ENCODE measurements at regions of chr1 and their contacts with region 1.

Region 1: GRCh38 chr1:110780600-110781484 is 92.1 kb upstream of the CD53 start:
- DNase-seq: peak; percentile 44 to 70 (median 49)
- ATAC-seq: peak; percentile 29 to 79
- H3K4me3 ChIP-seq: no peak overlapping the region
- H3K27ac ChIP-seq: no peak overlapping the region
- H3K4me1 ChIP-seq: no peaks in the 10 kb centered on the region
- H3K27me3 ChIP-seq: no peaks in the 10 kb centered on the region

Region 2: DNA sequence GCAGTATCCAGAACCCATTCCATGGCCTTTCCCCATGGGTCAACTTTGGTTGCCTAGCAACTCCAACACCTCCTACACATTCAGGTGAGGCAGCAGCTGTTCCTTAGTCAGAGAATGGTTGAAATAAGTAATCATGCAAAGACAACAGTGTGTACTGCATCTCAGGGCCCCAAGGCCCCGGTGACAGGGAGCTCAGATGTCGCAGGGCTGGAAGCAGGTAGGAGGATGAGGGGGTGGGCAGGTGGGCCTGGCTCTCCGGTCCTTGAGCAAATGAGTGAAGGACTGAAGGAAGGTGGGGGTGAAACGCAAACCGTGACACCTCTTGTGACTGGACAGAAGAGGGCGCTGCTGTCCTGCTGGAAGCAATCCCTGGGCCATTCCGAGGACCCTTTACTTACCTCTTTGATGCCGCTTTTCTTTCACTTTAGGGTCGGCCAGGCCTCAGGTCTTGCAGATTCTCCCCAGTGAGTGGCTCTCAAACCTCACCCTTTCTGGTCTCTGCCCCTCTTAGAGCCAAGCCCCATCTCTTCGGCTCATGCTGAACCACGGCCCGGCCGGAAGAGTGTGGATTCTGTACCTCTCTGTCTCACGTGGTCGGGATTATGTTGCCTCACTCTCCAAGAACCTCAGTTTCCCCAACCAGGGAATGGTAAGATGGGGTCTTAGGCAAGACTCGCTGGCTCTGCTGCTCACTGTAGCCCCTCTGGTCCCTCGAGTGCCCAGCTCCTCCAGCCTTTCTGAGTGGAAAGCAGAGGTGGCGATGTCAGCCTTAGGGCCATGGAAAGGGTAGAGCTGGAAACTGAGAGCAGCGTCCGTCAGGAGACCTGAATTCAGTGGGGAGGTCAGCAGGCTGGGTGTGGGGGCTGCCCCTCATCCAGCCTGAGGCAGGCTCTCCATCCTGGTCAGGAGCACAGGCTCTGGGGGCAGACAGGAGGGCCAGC is 256.3 kb before region 1 on chr1:
- intact Hi-C with region 1: loop called in 2 of 4 experiments (anchors 10 kb)
- DNase-seq: no peak
- ATAC-seq: peak; percentile 44 to 48
- H3K4me3 ChIP-seq: no peak overlapping the region
- H3K27ac ChIP-seq: no peak overlapping the region
- H3K4me1 ChIP-seq: no peaks in the 10 kb centered on the region
- H3K27me3 ChIP-seq: no peaks in the 10 kb centered on the region

Region 3: GRCh38 chr1:110554871-110555801 is 225.7 kb before region 1 on chr1:
- intact Hi-C with region 1: loop called in 2 of 4 experiments (anchors 10 kb)
- DNase-seq: peak; percentile 63 to 82 (median 78)
- ATAC-seq: peak; percentile 89 to 91
- H3K4me3 ChIP-seq: peak overlapping the region; percentile 36
- H3K27ac ChIP-seq: no peak overlapping the region
- H3K4me1 ChIP-seq: no peaks in the 10 kb centered on the region
- H3K27me3 ChIP-seq: no peaks in the 10 kb centered on the region

Region 4: DNA sequence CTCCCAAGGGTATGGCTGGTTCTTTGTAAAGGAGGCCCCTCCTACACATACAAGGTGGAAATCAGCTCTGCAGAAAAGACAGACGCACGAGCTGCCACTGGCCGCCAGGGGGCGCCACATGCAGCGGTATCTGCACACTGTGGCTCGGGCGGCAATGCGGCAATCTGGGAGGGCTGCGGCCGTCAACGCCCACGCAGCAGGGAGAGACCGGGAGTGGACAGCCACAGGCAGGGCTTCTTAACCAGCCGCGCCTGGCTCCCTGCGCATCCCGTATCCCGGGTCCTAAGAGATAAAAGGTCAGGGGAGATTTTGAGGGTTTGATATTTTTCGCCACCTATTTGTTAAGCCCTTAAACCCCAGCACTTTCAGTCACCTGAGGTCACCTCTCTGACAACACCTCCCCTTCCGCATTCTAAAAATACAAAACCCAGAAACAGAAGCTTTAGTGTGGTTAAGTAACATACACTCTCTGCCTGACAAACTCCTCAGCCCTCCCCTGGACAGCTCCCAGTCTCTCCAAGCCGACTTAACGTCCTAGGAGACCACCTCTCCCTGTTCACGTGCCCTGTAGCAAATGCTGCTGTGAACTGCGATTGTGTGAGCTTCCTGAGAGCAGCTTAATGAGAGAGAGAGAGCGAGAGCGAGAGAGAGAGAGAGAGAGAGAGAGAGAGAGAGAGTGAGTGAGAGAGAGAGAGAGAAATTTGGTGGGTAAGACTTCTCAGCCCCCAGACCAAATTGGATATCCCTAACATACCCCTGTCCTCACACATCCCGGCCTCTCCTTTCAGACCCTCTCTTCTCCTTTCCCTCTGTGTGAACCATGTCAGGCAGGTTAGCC is 161.2 kb before region 1 on chr1:
- intact Hi-C with region 1: loop called in 2 of 4 experiments (anchors 5 kb)
- DNase-seq: peak; percentile 88 to 93 (median 92)
- ATAC-seq: peak; percentile 88 to 92
- H3K4me3 ChIP-seq: no peak overlapping the region
- H3K27ac ChIP-seq: no peak overlapping the region
- H3K4me1 ChIP-seq: no peaks in the 10 kb centered on the region
- H3K27me3 ChIP-seq: no peaks in the 10 kb centered on the region

Region 5: DNA sequence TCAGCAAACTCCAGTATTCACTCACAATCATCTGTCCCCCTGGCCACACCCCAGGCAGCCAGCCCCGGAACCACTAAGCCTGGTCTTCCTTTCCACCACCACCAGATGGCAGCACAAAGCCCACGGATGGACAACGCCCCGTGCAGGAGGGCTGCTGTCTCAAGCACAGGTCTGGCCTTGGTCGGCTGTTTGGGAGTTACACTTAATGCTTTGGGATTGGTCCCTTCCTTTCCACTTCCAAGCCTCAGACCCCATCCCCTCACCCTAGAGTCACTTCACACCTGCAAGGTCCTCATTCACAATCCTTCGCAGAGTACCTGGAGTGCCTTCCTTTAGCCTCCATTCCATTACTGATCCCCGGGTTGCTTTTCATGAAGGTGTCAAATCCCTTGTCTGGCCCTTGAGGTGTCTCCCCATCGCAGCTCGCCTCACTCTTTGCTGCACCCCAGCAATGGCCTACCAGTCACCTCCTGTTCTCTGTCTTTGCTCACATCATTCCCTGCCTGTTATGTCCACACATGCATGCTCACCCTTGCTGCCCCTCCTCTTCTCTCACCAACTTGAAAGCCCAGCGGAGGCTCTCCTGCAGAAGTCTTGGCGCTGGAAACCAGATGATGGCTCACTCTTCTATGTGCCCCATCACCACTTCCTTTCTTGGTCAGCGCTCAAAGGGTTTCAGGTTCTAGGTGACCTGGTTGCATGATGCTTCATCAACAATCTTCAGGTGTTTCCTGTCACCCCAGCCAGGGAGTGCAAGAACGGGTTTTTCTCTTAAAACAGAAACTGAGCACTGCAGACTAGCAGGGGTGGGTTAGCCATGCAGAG is 149.8 kb before region 1 on chr1:
- intact Hi-C with region 1: loop called (anchors 2 to 5 kb)
- DNase-seq: peak; percentile 78 to 88 (median 86)
- ATAC-seq: peak; percentile 70 to 76
- H3K4me3 ChIP-seq: no peak overlapping the region
- H3K27ac ChIP-seq: no peak overlapping the region
- H3K4me1 ChIP-seq: peaks cover 4% of the 10 kb centered on the region
- H3K27me3 ChIP-seq: no peaks in the 10 kb centered on the region

Measured in right cardiac atrium (tissue), 5 donors.